Activated CD8-positive, alpha-beta T cell treated with anti-CD3 and anti-CD28 coated beads for 36 hours (primary cell): ENCODE measurements at regions of chr1 and their contacts with region 1.

Region 1: DNA sequence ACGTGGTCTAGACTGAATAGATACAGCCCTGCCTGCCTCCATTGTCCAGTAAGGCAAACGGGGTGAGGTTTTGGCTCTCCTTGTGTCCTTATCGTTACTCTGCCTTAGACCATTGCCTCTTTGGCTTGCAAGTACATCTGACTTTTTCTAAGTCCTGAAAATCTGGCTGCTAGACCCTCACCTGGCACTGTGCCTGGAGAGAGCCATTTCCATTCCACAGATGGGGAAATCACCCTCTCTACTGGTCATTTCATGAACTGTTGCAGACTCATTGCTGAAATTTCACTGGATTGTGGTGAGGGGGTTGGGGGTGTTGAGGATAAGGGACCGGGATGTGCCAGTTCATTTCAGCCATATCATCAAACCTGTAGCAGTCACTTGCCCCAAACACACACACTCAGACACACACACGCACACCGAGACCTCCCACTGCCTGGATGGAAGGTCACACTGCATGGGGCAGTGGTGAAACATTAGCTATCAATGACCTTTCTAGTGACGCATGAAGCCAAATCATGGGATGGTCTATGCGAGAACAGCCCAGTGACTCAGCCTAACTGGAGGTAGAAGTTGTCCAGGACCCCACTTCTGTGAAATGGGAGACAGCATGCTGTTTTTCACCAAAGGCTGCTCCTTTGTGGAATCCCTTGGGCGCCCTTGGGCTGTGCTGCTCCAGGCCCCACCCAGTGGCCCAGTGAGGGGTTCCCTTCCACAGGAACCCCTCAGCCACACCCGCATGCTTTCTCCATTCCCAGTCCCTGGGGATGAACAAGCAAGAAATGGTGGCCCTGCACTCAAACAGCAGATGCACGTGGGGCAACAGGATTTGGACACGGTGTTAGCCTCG is 34.9 kb upstream of the VASH2 start:
- DNase-seq: no peak
- ATAC-seq: no peak
- H3K4me3 Mint-ChIP-seq: no peak overlapping the region
- H3K27ac Mint-ChIP-seq: no peak overlapping the region
- H3K4me1 Mint-ChIP-seq: no peaks in the 10 kb centered on the region
- H3K27me3 Mint-ChIP-seq: peaks cover 1% of the 10 kb centered on the region
- CTCF ChIP-seq: no peak

Region 2: GRCh38 chr1:212933815-212934471 is 18.5 kb after region 1 on chr1:
- CTCF ChIA-PET with region 1: no interaction called
- POLR2A ChIA-PET with region 1: no interaction called
- intact Hi-C with region 1: loop called (anchors 2 kb)
- DNase-seq: no peak
- ATAC-seq: no peak
- H3K4me3 Mint-ChIP-seq: no peak overlapping the region
- H3K27ac Mint-ChIP-seq: no peak overlapping the region
- H3K4me1 Mint-ChIP-seq: no peaks in the 10 kb centered on the region
- H3K27me3 Mint-ChIP-seq: no peaks in the 10 kb centered on the region
- CTCF ChIP-seq: no peak